GM10248 (cell line): ENCODE measurements at regions of chr19 and their contacts with region 1.

Region 1: DNA sequence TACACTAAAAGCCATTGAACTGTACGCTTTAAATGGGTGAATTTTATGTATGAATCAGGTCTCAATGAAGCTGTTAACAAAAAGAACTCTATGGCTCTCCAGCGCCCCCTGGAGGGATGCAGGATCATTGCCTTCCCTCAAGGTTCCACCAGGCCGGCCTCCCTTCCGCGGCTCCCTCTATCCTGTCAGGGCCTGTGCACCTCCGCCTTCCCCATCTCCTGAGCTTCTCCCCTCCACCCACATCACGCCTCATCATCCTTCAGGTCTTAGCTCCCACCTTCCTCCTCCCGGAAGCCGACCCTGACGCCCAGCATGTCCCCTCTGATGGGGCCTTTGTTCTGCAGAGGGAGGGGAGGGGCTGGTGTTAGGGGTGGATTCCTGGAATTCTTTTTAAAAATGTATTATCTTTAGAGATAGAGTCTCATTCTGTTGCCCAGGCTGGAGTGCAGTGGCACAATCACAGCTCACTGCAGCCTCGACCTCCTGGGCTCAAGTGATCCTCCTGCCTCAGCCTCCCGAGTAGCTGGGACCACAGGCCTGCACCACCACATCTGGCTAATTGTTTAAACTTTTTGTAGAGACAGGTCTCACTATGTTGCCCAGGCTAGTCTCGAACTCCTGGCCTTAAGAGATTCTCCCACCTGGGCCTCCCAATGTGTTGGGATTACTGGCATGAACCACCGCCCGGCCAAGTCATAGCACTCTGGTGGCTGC is 27.7 kb downstream of the MEIS3 start:
- DNase-seq: peak; percentile 83
- CTCF ChIP-seq: peak; percentile 79

Region 2: GRCh38 chr19:47284324-47284899 is 107.3 kb before region 1 on chr19:
- CTCF ChIA-PET with region 1: interaction called, 15 read pairs
- POLR2A ChIA-PET with region 1: no interaction called
- DNase-seq: peak; percentile 57
- CTCF ChIP-seq: peak; percentile 80

Region 3: GRCh38 chr19:47296036-47296435 is 95.6 kb before region 1 on chr19:
- CTCF ChIA-PET with region 1: interaction called, 86 read pairs
- POLR2A ChIA-PET with region 1: no interaction called
- DNase-seq: peak; percentile 83
- CTCF ChIP-seq: peak; percentile 76

Region 4: GRCh38 chr19:47348819-47349795 is 42.6 kb before region 1 on chr19 and contains the start of gene DHX34:
- CTCF ChIA-PET with region 1: interaction called, 17 read pairs
- POLR2A ChIA-PET with region 1: no interaction called
- DNase-seq: peak; percentile 100
- CTCF ChIP-seq: peak; percentile 93

Region 5: GRCh38 chr19:47370045-47370611 is 21.5 kb before region 1 on chr19:
- CTCF ChIA-PET with region 1: interaction called, 14 read pairs
- POLR2A ChIA-PET with region 1: no interaction called
- DNase-seq: no peak
- CTCF ChIP-seq: no peak

Region 6: GRCh38 chr19:47402504-47402903 is 10.8 kb after region 1 on chr19:
- CTCF ChIA-PET with region 1: interaction called, 17 read pairs
- POLR2A ChIA-PET with region 1: no interaction called
- DNase-seq: no peak
- CTCF ChIP-seq: no peak

Region 7: GRCh38 chr19:47417746-47418691 is 26.4 kb after region 1 on chr19:
- CTCF ChIA-PET with region 1: interaction called, 10 read pairs
- POLR2A ChIA-PET with region 1: no interaction called
- DNase-seq: no peak
- CTCF ChIP-seq: no peak